Colonic mucosa (tissue), 4 donors: ENCODE measurements at regions of chr20 and their contacts with region 1.

Region 1: GRCh38 chr20:34129518-34130162 is 17.6 kb upstream of the EIF2S2 start:
- DNase-seq: peak; percentile 67
- H3K4me3 ChIP-seq: no peak overlapping the region
- H3K27ac ChIP-seq: no peak overlapping the region
- H3K4me1 ChIP-seq: no peaks in the 10 kb centered on the region
- H3K27me3 ChIP-seq: no peaks in the 10 kb centered on the region
- CTCF ChIP-seq: peak; percentile 69

Region 2: GRCh38 chr20:33862709-33863403 is 266.8 kb before region 1 on chr20:
- intact Hi-C with region 1: loop called (anchors 5 kb)
- DNase-seq: peak; percentile 40
- H3K4me3 ChIP-seq: no peak overlapping the region
- H3K27ac ChIP-seq: no peak overlapping the region
- H3K4me1 ChIP-seq: no peaks in the 10 kb centered on the region
- H3K27me3 ChIP-seq: no peaks in the 10 kb centered on the region
- CTCF ChIP-seq: peak; percentile 77

Region 3: DNA sequence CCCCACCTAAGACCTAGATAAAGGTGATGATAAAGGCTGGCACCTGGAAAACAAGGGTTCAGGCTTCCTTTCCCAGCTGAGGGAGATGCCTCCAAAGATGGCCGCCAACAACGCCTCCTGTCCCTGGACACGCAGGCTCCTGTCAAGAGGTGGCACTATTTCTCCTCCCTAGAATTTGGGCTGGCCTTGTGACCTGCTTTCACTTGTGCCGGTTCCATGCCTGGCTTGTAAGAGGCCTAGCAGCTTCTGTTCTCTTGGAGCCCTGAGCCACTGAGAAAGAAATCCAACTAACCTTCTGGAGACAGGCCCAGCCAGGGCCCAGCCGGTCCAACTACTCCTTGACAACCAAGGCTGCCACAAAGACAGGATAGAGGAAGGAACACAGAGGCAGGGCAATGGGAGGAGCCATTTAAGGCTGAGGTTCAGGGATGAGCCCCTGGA is 196.2 kb before region 1 on chr20:
- intact Hi-C with region 1: loop called (anchors 5 kb)
- DNase-seq: peak; percentile 66
- H3K4me3 ChIP-seq: no peak overlapping the region
- H3K27ac ChIP-seq: no peak overlapping the region
- H3K4me1 ChIP-seq: no peaks in the 10 kb centered on the region
- H3K27me3 ChIP-seq: no peaks in the 10 kb centered on the region
- CTCF ChIP-seq: peak; percentile 54